HepG2 (cell line): ENCODE measurements at regions of chr17 and their contacts with region 1.

Region 1: DNA sequence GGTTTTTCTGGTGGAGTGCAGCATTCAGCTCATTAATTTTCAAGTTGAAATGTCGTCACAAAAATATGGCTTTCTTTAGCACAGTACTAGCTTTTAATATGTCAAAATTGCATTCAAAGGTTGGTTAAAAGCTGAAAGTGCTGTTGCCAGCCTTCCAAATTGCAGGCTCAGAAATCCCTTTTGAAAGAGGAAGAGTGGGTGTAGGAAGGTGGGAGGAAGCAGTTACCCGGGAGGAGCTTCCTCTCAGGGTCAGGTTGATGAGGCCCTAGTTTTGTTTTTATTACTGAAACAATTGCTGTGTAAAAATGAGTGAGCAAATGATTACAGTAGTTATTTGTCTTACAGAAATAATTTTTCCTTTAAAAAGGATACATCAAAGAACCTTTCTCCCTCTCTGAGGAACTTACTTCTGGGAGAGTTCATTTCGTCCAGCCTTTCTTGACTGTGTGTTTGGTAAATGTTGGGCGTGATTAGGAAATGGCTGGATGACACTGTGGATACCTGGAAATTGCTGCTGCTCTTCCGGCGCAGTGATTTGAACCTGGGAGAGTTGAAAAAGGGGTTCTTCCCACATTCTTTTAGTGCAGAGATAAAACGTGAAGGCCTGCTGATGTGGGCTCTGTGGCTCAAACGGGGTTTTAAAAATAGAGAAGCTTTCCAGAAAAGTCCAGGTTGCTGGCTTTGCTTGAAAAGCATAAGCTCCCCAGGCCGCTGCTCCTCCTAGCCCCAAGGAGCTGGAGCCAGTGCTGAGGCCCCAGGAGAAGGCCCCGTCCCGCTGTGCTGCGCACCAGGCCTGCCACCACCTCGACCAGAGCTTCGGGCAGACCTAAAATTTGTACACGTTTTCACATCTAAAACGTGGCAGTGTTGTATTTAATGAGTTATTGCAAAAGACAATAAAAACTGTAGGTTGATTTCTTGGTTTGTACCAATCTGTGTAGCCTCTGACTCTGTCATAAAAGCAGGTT is 41.7 kb downstream of the SEC14L1 start:
- DNase-seq: no peak
- ATAC-seq: no peak
- H3K4me3 ChIP-seq: no peak overlapping the region
- H3K27ac ChIP-seq: no peak overlapping the region
- H3K4me1 ChIP-seq: peaks cover 73% of the 10 kb centered on the region
- H3K27me3 ChIP-seq: no peaks in the 10 kb centered on the region
- CTCF ChIP-seq: no peak
- EP300 ChIP-seq: no peak
- POLR2A ChIP-seq: no peak
- RAD21 ChIP-seq: no peak

Region 2: GRCh38 chr17:77145612-77146245 is 36.8 kb before region 1 on chr17:
- CTCF ChIA-PET with region 1: no interaction called
- POLR2A ChIA-PET with region 1: interaction called, 8 read pairs
- in situ Hi-C with region 1: no loop called
- intact Hi-C with region 1: loop called (anchors 5 kb)
- DNase-seq: peak; percentile 70
- ATAC-seq: peak; percentile 75
- H3K4me3 ChIP-seq: 0 out of 6 replicates have a peak overlapping the region, but pooled peaks of 1 of the 3 experiments have one; percentile 13
- H3K27ac ChIP-seq: peak overlapping the region; percentile 68
- H3K4me1 ChIP-seq: peaks cover 85% of the 10 kb centered on the region
- H3K27me3 ChIP-seq: no peaks in the 10 kb centered on the region; a peak in 1 of 5 replicates
- CTCF ChIP-seq: peak; percentile 54
- EP300 ChIP-seq: no peak; a peak in 1 of 4 replicates
- POLR2A ChIP-seq: no peak
- RAD21 ChIP-seq: 0 out of 2 replicates have a peak, but pooled peaks have one; percentile 46

Region 3: GRCh38 chr17:77214743-77215142 is 32.3 kb after region 1 on chr17:
- CTCF ChIA-PET with region 1: no interaction called
- POLR2A ChIA-PET with region 1: no interaction called
- in situ Hi-C with region 1: no loop called
- intact Hi-C with region 1: no loop called
- DNase-seq: peak; percentile 65
- ATAC-seq: peak; percentile 87
- H3K4me3 ChIP-seq: no peak overlapping the region
- H3K27ac ChIP-seq: no peak overlapping the region
- H3K4me1 ChIP-seq: peaks cover 5% of the 10 kb centered on the region
- H3K27me3 ChIP-seq: no peaks in the 10 kb centered on the region
- CTCF ChIP-seq: peak; percentile 84
- EP300 ChIP-seq: no peak
- POLR2A ChIP-seq: no peak
- RAD21 ChIP-seq: peak; percentile 82

Region 4: GRCh38 chr17:77942112-77942988 is 759.9 kb after region 1 on chr17:
- CTCF ChIA-PET with region 1: no interaction called
- POLR2A ChIA-PET with region 1: no interaction called
- in situ Hi-C with region 1: no loop called
- intact Hi-C with region 1: loop called (anchors 5 kb)
- DNase-seq: peak; percentile 76
- ATAC-seq: peak; percentile 70
- H3K4me3 ChIP-seq: no peak overlapping the region; a peak in 1 of 6 replicates
- H3K27ac ChIP-seq: no peak overlapping the region
- H3K4me1 ChIP-seq: peaks cover 20% of the 10 kb centered on the region
- H3K27me3 ChIP-seq: peaks cover 3 to 50% of the 10 kb centered on the region in 2 experiments; a peak in 4 of 5 replicates
- CTCF ChIP-seq: no peak
- EP300 ChIP-seq: no peak
- POLR2A ChIP-seq: no peak
- RAD21 ChIP-seq: no peak

Region 5: DNA sequence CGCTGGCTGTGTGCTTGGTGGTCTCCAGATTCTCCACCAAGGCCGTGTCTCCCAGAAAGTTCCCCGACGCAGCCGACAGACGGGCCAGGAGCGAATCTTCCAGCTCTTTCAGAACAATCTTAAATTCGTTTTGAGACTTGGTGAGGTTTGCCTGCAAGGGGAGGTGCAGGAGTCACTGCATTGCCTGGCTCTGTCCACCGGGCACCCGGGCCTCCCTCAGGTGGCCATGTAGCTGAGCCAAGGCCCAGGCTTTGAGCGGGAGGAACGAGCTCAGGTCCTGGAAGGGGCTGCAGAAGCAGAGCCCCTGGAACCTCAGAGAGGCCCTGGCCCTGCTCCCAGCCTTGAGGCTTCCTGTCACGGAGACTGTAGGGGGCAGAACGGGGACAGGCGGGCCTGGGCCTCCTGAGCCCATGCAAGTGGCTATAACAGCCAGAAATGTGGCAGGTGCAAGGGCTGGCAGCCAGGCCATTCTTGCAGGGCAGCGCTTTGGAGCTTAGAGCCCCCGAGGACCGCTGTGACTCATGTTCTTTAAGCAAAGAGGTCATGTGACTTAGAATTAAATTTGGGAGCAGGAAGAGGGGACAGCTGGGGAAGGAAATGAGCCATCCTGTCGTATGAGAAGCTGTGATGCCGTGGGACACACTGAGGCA is 1268.3 kb after region 1 on chr17:
- CTCF ChIA-PET with region 1: no interaction called
- POLR2A ChIA-PET with region 1: no interaction called
- in situ Hi-C with region 1: no loop called
- intact Hi-C with region 1: loop called (anchors 5 kb)
- DNase-seq: no peak
- ATAC-seq: peak; percentile 35
- H3K4me3 ChIP-seq: no peak overlapping the region
- H3K27ac ChIP-seq: no peak overlapping the region
- H3K4me1 ChIP-seq: peaks cover 16% of the 10 kb centered on the region
- H3K27me3 ChIP-seq: peaks cover 1 to 36% of the 10 kb centered on the region in 2 experiments; a peak in 4 of 5 replicates
- CTCF ChIP-seq: peak; percentile 18; the same call in 1 of the 2 replicates
- EP300 ChIP-seq: no peak
- POLR2A ChIP-seq: no peak
- RAD21 ChIP-seq: no peak